HEK293 (cell line): ENCODE measurements at regions of chr7 and their contacts with region 1.

Region 1: GRCh38 chr7:74289018-74289658 is at the start of gene CLIP2:
- H3K4me3 ChIP-seq: peak within 1 kb of the TSS; percentile 56
- H3K27ac ChIP-seq: peak within 1 kb of the TSS; percentile 57; the same call in 1 of the 2 replicates
- H3K4me1 ChIP-seq: peaks cover 5% of the 10 kb centered on the region; the same call in 1 of the 2 replicates
- CTCF ChIP-seq: no peak

Region 2: DNA sequence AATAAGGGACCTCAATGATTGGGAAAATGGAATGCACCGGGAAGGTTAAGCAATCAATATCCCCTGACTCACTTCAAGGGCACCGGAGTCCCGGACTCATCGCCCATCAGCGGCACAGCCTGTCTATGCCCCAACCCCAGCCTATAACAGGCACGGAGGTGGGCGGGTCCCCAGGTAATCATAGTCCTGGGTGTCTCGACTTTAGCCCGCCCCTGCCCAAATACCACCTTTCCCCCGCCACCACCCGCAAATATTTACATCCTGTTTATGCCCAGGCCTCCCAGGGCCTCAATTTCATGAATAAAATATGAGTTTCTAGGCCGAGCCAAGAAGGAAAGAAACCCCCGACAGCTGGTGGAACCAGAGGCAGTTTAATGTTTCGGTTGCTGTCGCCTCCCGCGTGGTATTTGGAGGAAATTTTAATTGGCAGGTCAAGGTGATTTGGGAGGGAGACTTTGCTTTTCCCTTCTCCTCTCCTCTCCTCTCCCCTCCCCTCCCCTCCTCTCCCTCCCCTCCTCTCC is 19.3 kb before region 1 on chr7:
- CTCF ChIA-PET with region 1: interaction called, 40 read pairs
- POLR2A ChIA-PET with region 1: interaction called, 10 read pairs
- H3K4me3 ChIP-seq: peak overlapping the region; percentile 32
- H3K27ac ChIP-seq: no peak overlapping the region
- H3K4me1 ChIP-seq: no peaks in the 10 kb centered on the region
- CTCF ChIP-seq: no peak

Region 3: GRCh38 chr7:74275401-74275881 is 13.7 kb before region 1 on chr7:
- CTCF ChIA-PET with region 1: interaction called, 40 read pairs
- POLR2A ChIA-PET with region 1: interaction called, 10 read pairs
- H3K4me3 ChIP-seq: no peak overlapping the region
- H3K27ac ChIP-seq: no peak overlapping the region
- H3K4me1 ChIP-seq: 0 out of 2 replicates have a peak, but pooled peaks cover 2% of the 10 kb centered on the region
- CTCF ChIP-seq: peak; percentile 54; the same call in 1 of the 2 replicates

Region 4: GRCh38 chr7:74302745-74303221 is 13.6 kb after region 1 on chr7:
- CTCF ChIA-PET with region 1: no interaction called
- POLR2A ChIA-PET with region 1: no interaction called
- H3K4me3 ChIP-seq: no peak overlapping the region
- H3K27ac ChIP-seq: no peak overlapping the region
- H3K4me1 ChIP-seq: no peaks in the 10 kb centered on the region
- CTCF ChIP-seq: no peak

Region 5: DNA sequence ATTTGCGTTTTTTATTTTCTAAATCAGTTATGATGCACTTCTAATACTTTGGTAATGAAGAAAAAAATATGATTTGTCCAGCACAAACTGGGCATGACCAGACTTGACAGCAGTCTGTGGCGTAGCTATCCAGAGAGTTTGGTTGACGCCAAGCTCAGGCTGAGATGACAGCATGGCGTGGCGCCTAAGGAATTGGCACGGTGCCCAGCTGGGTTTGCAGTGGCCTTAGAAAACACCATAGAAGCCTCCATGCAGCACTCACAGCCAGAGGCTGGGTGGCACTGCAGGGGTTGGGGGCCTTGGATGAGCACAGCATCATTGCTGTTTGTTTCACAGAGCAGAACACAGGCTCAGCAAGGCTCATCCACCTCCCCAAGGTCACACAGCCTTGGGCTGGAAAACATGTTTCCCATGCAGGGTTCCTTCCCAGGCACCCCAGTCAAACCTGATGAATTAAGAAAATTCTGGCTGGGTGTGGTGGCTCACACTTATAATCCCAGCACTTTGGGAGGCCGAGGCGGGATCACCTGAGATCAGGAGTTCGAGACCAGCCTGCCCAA is 253.5 kb after region 1 on chr7:
- CTCF ChIA-PET with region 1: no interaction called
- POLR2A ChIA-PET with region 1: no interaction called
- H3K4me3 ChIP-seq: no peak overlapping the region
- H3K27ac ChIP-seq: no peak overlapping the region
- H3K4me1 ChIP-seq: no peaks in the 10 kb centered on the region
- CTCF ChIP-seq: no peak

Region 6: GRCh38 chr7:74560086-74560719 is 271.1 kb after region 1 on chr7:
- CTCF ChIA-PET with region 1: no interaction called
- POLR2A ChIA-PET with region 1: no interaction called
- H3K4me3 ChIP-seq: no peak overlapping the region
- H3K27ac ChIP-seq: no peak overlapping the region
- H3K4me1 ChIP-seq: no peaks in the 10 kb centered on the region
- CTCF ChIP-seq: no peak